ENCODE measurements at regions of chr9 and their contacts with region 1.

Region 1: DNA sequence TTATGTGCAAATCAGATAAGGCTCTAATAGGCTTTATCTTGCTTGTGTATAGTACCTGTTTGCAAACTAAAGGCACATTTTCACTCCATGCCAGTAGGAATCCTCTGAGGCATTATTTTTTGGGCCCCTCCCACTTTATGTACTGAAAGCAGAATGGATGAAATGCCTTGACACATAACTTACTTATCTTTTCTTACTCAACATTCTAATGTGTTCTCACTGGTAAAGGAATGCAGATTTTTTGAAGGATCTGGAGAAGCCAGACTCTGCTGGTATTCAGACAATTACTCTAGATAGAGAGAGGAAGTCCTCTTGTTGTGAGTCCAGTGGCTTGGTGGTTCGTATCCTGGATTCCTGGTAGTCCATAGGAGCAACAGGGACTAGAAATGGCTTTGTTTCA is 336.7 kb downstream of the CCDC171 start:
- DNase-seq: no peak
- H3K4me3 ChIP-seq: no peak overlapping the region
- H3K27ac ChIP-seq: no peak overlapping the region
- H3K4me1 ChIP-seq: no peaks in the 10 kb centered on the region
- H3K27me3 ChIP-seq: no peaks in the 10 kb centered on the region
- CTCF ChIP-seq: no peak

Region 2: GRCh38 chr9:15959663-15960062 is 70.1 kb after region 1 on chr9:
- intact Hi-C with region 1: loop called (anchors 10 kb)
- DNase-seq: no peak
- H3K4me3 ChIP-seq: no peak overlapping the region
- H3K27ac ChIP-seq: no peak overlapping the region
- H3K4me1 ChIP-seq: peaks cover 0 to 6% (median 0%) of the 10 kb centered on the region in 3 donors
- H3K27me3 ChIP-seq: no peaks in the 10 kb centered on the region
- CTCF ChIP-seq: no peak

Measured in kidney (tissue), 22 donors.